ENCODE measurements at regions of chr20 and their contacts with region 1.

Region 1: GRCh38 chr20:31723319-31724078 is 831 bp upstream of the BCL2L1 start:
- DNase-seq: peak in 1 of 2 donors; percentile 99
- H3K4me3 ChIP-seq: peak overlapping the region; percentile 72 to 76
- H3K27ac ChIP-seq: peak overlapping the region; percentile 99
- H3K4me1 ChIP-seq: peaks cover 37% of the 10 kb centered on the region
- H3K27me3 ChIP-seq: no peaks in the 10 kb centered on the region
- CTCF ChIP-seq: peak; percentile 93 to 97 (median 93)
- POLR2A ChIP-seq: peak in 1 of 2 donors; percentile 78

Region 2: DNA sequence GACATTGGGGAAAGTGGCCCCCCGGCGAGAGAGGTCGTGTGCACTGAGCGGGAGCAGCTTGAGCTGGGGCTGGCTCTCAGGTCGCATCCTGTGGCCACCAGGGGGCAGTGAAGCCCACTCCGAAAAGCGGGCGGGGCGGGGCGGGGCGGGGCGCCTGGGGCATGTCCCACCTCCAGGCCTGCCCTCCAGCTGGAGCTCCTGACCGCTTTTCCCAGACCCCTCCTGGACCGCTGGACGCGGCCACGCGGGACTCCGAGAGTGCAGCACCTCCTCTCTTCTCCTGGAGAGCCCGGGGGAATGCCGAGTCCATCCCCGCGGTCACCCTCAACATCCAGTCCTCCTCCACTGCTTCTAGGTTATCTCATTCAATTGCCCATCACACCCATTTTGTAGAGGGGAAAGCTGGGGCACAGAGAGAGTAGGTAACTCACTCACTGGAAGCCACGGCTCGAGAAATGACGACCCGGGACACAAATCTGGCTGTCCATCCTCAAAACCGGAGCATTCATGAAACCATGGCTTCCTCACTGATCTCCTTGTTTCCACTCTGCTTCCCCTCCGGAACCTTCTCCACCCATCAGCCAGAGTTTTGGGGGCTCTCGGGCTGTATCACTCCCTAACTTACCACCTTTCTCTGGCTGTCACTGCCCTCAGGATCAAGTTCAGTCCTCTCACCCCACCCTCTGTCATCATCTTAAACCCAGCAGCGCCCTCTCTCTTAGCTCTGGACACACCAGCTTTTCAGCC is 61.7 kb before region 1 on chr20:
- intact Hi-C with region 1: loop called (anchors 2 kb)
- DNase-seq: peak in 1 of 2 donors; percentile 92
- H3K4me3 ChIP-seq: peak overlapping the region; percentile 39 to 41
- H3K27ac ChIP-seq: peak overlapping the region; percentile 92
- H3K4me1 ChIP-seq: peaks cover 50% of the 10 kb centered on the region
- H3K27me3 ChIP-seq: no peaks in the 10 kb centered on the region
- CTCF ChIP-seq: peak; percentile 60 to 96 (median 64)
- POLR2A ChIP-seq: no peak

Region 3: DNA sequence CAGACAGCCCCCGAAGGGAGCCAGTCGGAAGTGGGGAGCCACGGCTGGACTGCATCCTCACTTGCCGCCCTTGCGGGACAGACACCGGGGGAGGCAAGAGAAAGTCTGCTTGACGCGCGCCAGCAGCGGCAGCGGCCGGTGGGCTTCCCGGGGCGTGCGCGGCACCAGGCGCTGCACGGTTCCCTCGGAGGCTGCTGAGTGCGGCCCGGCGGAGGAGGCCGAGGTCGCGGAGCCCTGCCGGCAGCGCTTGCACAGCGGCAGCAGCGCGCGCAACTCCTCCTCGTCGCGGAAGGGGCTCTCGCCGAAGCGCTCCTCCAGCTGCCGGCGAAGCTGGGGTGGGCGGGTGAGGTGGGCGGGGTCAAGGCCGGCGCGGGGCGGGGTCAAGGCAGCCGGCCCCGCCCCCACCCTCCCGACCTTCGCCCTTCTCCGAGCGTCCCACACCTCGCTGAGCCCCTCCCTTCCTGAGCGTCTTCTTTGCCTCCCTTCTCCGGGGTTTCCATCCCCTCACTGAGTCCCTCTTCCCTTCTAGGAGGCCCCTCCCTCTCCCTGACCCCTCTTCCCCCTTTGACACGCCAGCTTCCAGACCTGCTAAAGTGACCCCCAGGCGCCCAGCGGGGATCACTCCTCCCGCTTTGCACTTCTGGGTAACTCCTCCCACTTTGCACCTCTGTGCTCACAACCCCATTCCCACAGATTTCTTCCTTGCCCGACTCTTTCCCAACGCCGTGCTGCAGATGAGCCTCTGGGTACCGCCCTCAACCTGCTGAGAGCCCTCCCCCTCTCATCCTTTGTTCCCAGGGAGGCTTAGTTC is 138.1 kb after region 1 on chr20:
- intact Hi-C with region 1: no loop called
- DNase-seq: no peak
- H3K4me3 ChIP-seq: peak overlapping the region; percentile 54 to 84
- H3K27ac ChIP-seq: no peak overlapping the region
- H3K4me1 ChIP-seq: peaks cover 15% of the 10 kb centered on the region
- H3K27me3 ChIP-seq: no peaks in the 10 kb centered on the region
- CTCF ChIP-seq: no peak
- POLR2A ChIP-seq: no peak